Mammary epithelial cell (primary cell): ENCODE measurements at regions of chr1 and their contacts with region 1.

Region 1: GRCh38 chr1:86913896-86914634 is at the start of gene SELENOF:
- DNase-seq: peak; percentile 100
- H3K4me3 ChIP-seq: peak within 1 kb of the TSS; percentile 89 to 98 (median 92)
- H3K27ac ChIP-seq: peak within 1 kb of the TSS; percentile 94
- H3K4me1 ChIP-seq: peaks cover 10% of the 10 kb centered on the region
- H3K27me3 ChIP-seq: no peaks in the 10 kb centered on the region
- CTCF ChIP-seq: no peak
- total RNA-seq, gene SELENOF: 103 to 119 TPM

Region 2: GRCh38 chr1:86774305-86775295 is 139.5 kb before region 1 on chr1:
- CTCF ChIA-PET with region 1: no interaction called
- dilution Hi-C with region 1: no loop called
- in situ Hi-C with region 1: loop called in 1 of 2 experiments (anchors 10 kb)
- intact Hi-C with region 1: no loop called
- DNase-seq: peak; percentile 77
- H3K4me3 ChIP-seq: no peak overlapping the region
- H3K27ac ChIP-seq: peak overlapping the region; percentile 30
- H3K4me1 ChIP-seq: peaks cover 43% of the 10 kb centered on the region
- H3K27me3 ChIP-seq: no peaks in the 10 kb centered on the region
- CTCF ChIP-seq: no peak

Region 3: GRCh38 chr1:86833461-86834215 is 80.4 kb before region 1 on chr1:
- CTCF ChIA-PET with region 1: no interaction called
- dilution Hi-C with region 1: no loop called
- in situ Hi-C with region 1: no loop called
- intact Hi-C with region 1: loop called (anchors 5 kb)
- DNase-seq: peak; percentile 71
- H3K4me3 ChIP-seq: no peak overlapping the region
- H3K27ac ChIP-seq: no peak overlapping the region
- H3K4me1 ChIP-seq: no peaks in the 10 kb centered on the region
- H3K27me3 ChIP-seq: no peaks in the 10 kb centered on the region
- CTCF ChIP-seq: peak; percentile 39 to 64

Region 4: GRCh38 chr1:86852782-86853408 is 61.2 kb before region 1 on chr1:
- CTCF ChIA-PET with region 1: no interaction called
- dilution Hi-C with region 1: no loop called
- in situ Hi-C with region 1: no loop called
- intact Hi-C with region 1: loop called (anchors 5 kb)
- DNase-seq: no peak
- H3K4me3 ChIP-seq: no peak overlapping the region
- H3K27ac ChIP-seq: no peak overlapping the region
- H3K4me1 ChIP-seq: peaks cover 3% of the 10 kb centered on the region
- H3K27me3 ChIP-seq: no peaks in the 10 kb centered on the region
- CTCF ChIP-seq: no peak

Region 5: GRCh38 chr1:86868477-86868876 is 45.6 kb before region 1 on chr1:
- CTCF ChIA-PET with region 1: no interaction called
- dilution Hi-C with region 1: no loop called
- in situ Hi-C with region 1: no loop called
- intact Hi-C with region 1: loop called (anchors 2 kb)
- DNase-seq: no peak
- H3K4me3 ChIP-seq: no peak overlapping the region
- H3K27ac ChIP-seq: no peak overlapping the region
- H3K4me1 ChIP-seq: no peaks in the 10 kb centered on the region
- H3K27me3 ChIP-seq: no peaks in the 10 kb centered on the region
- CTCF ChIP-seq: no peak

Region 6: GRCh38 chr1:86933562-86934377 is 19.7 kb after region 1 on chr1:
- CTCF ChIA-PET with region 1: no interaction called
- dilution Hi-C with region 1: no loop called
- in situ Hi-C with region 1: no loop called
- intact Hi-C with region 1: loop called (anchors 2 kb)
- DNase-seq: no peak
- H3K4me3 ChIP-seq: no peak overlapping the region
- H3K27ac ChIP-seq: no peak overlapping the region
- H3K4me1 ChIP-seq: no peaks in the 10 kb centered on the region
- H3K27me3 ChIP-seq: no peaks in the 10 kb centered on the region
- CTCF ChIP-seq: no peak

Region 7: DNA sequence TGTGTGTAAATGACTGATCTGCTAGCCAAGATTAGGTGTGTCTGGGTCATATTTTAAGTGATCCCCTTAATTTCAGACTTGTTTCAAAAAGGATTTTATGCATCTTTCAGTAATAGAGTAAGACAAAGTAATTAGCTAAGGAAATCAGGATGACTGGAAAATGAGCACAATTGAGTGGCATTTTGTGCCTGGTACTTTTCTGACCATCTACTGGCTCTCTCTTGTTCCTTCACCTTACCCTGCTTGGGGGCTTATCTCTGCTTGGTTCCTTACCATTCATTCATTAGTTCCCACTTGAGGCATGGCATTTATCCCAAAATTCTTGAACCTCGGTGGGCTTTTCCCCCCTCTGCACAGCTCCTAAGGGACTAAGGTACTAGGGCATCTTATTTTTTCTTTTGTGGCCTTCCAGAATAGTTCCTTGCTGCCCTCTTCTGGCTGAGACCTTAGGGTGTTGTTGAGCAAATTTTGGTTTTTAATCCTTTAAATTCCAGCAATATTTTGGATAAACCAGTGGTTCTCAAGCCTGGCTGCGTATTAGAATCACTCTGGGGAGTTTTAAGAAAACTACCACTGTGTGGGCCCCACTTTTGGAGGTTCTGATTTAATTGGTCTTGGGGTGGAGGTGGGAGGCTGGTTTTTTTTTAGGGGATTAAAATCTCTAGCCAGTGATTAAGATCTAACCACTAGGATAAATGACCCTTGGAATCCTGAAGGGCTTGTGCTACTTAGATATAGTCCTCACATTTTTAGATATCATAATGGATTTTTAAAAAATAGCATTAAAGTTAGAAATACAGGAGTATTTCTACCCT is 51.2 kb after region 1 on chr1:
- CTCF ChIA-PET with region 1: no interaction called
- dilution Hi-C with region 1: no loop called
- in situ Hi-C with region 1: no loop called
- intact Hi-C with region 1: loop called (anchors 2 kb)
- DNase-seq: peak; percentile 11
- H3K4me3 ChIP-seq: no peak overlapping the region
- H3K27ac ChIP-seq: no peak overlapping the region
- H3K4me1 ChIP-seq: no peaks in the 10 kb centered on the region
- H3K27me3 ChIP-seq: no peaks in the 10 kb centered on the region
- CTCF ChIP-seq: peak; percentile 65 to 70